ENCODE measurements at regions of chr1 and their contacts with region 1.

Region 1: DNA sequence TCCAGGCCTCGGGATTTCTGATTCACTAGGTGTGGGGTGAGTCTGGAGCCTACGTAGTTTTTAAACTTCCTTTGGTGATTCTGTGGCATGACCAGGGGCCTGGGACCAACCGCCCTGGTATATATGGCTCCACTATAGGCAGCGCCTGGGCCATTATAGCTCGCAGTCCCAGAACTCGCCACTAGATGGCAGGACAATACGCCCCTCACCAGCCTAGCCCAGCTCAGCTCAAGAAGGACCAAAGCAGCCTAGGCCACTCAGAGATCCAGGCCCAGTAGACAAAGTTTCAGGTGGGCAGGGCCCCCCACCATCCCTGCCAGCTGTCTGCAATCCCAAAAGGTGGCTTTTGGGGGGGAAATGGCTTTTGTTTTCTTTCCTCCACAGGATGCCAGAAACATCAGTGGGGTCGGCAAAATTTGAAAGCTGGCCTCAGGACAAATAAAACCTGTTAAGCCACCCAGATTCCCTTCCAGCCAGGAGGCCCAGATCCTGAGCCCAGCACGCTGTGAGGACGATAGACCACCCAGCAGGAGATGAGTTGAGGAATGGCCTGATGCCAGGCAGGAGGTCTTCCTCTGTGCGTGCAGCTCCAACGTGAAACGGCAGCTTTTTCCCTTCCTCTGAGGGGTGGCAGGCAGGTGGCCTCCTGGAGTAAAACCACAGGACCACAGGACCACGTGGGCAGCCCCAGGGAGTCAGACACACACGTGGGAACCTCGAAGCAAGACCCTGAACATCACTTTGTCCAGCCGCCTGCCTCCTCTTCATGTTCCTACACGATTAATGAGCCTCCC is 24.8 kb upstream of the TMEM51 start:
- DNase-seq: peak; percentile 62 to 69
- H3K4me3 ChIP-seq: no peak overlapping the region
- H3K27ac ChIP-seq: no peak overlapping the region
- H3K4me1 ChIP-seq: no peaks in the 10 kb centered on the region
- H3K27me3 ChIP-seq: no peaks in the 10 kb centered on the region
- CTCF ChIP-seq: peak; percentile 74 to 93 (median 85)
- POLR2A ChIP-seq: no peak

Region 2: GRCh38 chr1:15196807-15197530 is 68.3 kb after region 1 on chr1:
- intact Hi-C with region 1: no loop called
- DNase-seq: peak; percentile 58 to 67
- H3K4me3 ChIP-seq: no peak overlapping the region
- H3K27ac ChIP-seq: no peak overlapping the region
- H3K4me1 ChIP-seq: peaks cover 0 to 17% of the 10 kb centered on the region in 2 donors
- H3K27me3 ChIP-seq: no peaks in the 10 kb centered on the region
- CTCF ChIP-seq: no peak
- POLR2A ChIP-seq: no peak

Region 3: DNA sequence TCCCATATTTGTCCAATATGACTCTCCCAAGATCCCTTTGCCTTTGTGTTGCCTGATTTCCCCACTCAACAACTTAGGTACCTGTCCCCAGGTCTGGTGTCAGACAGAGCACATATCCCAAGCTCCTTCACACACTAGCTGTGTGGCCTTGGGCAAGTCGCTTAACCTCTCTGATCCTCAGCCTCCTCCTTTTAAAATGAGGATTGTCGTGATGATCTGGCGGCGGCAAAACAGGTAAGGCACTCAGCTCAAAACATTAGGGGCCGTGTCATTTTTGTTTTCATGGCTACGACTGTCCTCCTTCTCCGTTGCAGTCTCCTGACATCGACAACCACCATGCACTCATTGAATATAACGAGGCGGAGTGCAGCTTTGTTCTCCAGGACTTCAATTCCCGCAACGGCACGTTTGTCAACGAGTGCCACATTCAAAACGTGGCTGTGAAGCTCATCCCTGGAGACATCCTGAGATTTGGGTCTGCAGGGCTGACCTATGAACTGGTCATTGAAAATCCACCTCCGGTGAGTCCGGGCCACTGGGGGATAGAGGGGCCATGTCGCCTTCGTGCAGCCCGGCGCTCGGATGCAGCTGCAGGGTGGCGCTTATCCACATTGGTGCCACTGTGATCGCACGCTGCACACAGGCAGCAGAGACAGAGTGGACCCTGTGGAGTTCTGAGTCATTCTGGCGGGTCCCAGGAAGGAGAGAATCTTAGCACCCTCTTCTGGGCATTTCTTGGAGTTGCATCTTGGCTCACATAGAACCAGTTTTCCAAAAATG is 143.5 kb after region 1 on chr1:
- intact Hi-C with region 1: loop called (anchors 10 kb)
- DNase-seq: peak; percentile 50
- H3K4me3 ChIP-seq: no peak overlapping the region
- H3K27ac ChIP-seq: no peak overlapping the region
- H3K4me1 ChIP-seq: peaks cover 0 to 4% of the 10 kb centered on the region in 2 donors
- H3K27me3 ChIP-seq: no peaks in the 10 kb centered on the region
- CTCF ChIP-seq: peak; percentile 37 to 79 (median 72)
- POLR2A ChIP-seq: no peak

Region 4: GRCh38 chr1:15304701-15305467 is 176.2 kb after region 1 on chr1:
- intact Hi-C with region 1: loop called (anchors 2 kb)
- DNase-seq: peak; percentile 61 to 72
- H3K4me3 ChIP-seq: no peak overlapping the region
- H3K27ac ChIP-seq: no peak overlapping the region
- H3K4me1 ChIP-seq: peaks cover 0 to 3% of the 10 kb centered on the region in 2 donors
- H3K27me3 ChIP-seq: no peaks in the 10 kb centered on the region
- CTCF ChIP-seq: peak; percentile 61 to 90 (median 84)
- POLR2A ChIP-seq: no peak